Mammary epithelial cell (primary cell): ENCODE measurements at regions of chr2 and their contacts with region 1.

Region 1: GRCh38 chr2:209016207-209016606 is 407.6 kb upstream of the MAP2 start:
- DNase-seq: no peak
- H3K4me3 ChIP-seq: no peak overlapping the region
- H3K27ac ChIP-seq: no peak overlapping the region
- H3K4me1 ChIP-seq: no peaks in the 10 kb centered on the region
- H3K27me3 ChIP-seq: no peaks in the 10 kb centered on the region
- CTCF ChIP-seq: no peak

Region 2: GRCh38 chr2:208929139-208929864 is 86.9 kb before region 1 on chr2:
- CTCF ChIA-PET with region 1: no interaction called
- dilution Hi-C with region 1: loop called (anchors 5 kb)
- in situ Hi-C with region 1: no loop called
- intact Hi-C with region 1: no loop called
- DNase-seq: no peak
- H3K4me3 ChIP-seq: no peak overlapping the region
- H3K27ac ChIP-seq: no peak overlapping the region
- H3K4me1 ChIP-seq: no peaks in the 10 kb centered on the region
- H3K27me3 ChIP-seq: no peaks in the 10 kb centered on the region
- CTCF ChIP-seq: no peak